Caco-2 (cell line): ENCODE measurements at regions of chr10 and their contacts with region 1.

Region 1: GRCh38 chr10:12129222-12130111 is at the start of gene SEC61A2:
- DNase-seq: peak; percentile 97 to 100
- H3K4me3 ChIP-seq: peak within 1 kb of the TSS; percentile 98
- H3K4me3 Mint-ChIP-seq: peak within 1 kb of the TSS; percentile 79
- H3K27ac Mint-ChIP-seq: peak within 1 kb of the TSS; percentile 87
- H3K4me1 ChIP-seq: 0 out of 2 replicates have a peak, but pooled peaks cover 5% of the 10 kb centered on the region
- H3K4me1 Mint-ChIP-seq: peaks cover 6% of the 10 kb centered on the region
- H3K27me3 ChIP-seq: no peaks in the 10 kb centered on the region
- H3K27me3 Mint-ChIP-seq: no peaks in the 10 kb centered on the region
- CTCF ChIP-seq: no peak
- total RNA-seq, gene SEC61A2: 27.5 and 34.1 TPM in 2 replicates

Region 2: GRCh38 chr10:12068449-12069269 is 60.8 kb before region 1 on chr10 and contains the start of gene DHTKD1:
- CTCF ChIA-PET with region 1: no interaction called
- POLR2A ChIA-PET with region 1: interaction called, 9 read pairs
- intact Hi-C with region 1: loop called (anchors 1 kb)
- DNase-seq: peak; percentile 99 to 100
- H3K4me3 ChIP-seq: peak within 1 kb of the TSS; percentile 77
- H3K4me3 Mint-ChIP-seq: peak within 1 kb of the TSS; percentile 63
- H3K27ac Mint-ChIP-seq: peak within 1 kb of the TSS; percentile 66
- H3K4me1 ChIP-seq: peaks cover 9% of the 10 kb centered on the region; the same call in 1 of the 2 replicates
- H3K4me1 Mint-ChIP-seq: peaks cover 11% of the 10 kb centered on the region
- H3K27me3 ChIP-seq: no peaks in the 10 kb centered on the region
- H3K27me3 Mint-ChIP-seq: no peaks in the 10 kb centered on the region
- CTCF ChIP-seq: peak in 1 of 2 experiments; percentile 61
- total RNA-seq, gene DHTKD1: 57.8 and 61.4 TPM in 2 replicates

Region 3: DNA sequence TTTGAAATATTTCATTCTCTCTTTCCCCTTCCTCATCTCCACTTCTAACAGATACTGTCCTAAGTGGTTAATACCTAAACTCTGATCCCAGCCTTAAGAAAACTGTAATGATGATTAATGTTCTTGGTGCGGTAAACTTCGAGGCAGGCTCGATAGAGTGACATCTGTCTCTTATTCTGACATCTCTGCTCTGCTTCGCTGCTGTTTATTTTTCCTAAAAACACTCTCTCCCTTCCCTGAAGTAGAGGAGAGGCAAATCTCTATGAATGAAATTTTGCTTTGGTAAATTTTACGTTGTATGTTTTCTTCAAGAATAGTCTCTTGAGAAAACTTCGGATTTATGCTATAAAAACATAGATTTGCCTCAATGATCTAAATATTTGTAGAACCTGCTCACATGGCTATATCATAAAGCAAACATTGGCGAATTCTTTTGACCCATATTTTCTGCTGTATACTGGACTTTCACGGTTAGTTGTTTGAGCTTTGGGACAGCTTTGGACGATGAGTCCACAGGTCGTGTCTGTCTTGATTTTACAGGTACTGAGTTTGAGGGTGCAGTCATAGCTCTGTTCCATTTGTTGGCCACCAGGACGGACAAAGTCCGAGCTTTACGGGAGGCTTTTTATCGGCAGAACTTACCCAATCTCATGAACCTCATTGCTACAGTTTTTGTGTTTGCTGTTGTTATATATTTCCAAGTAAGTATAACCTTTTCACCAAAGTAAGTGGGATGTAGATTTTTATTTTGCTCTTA is 27.1 kb after region 1 on chr10:
- CTCF ChIA-PET with region 1: interaction called, 8 read pairs
- POLR2A ChIA-PET with region 1: no interaction called
- intact Hi-C with region 1: loop called (anchors 1 kb)
- DNase-seq: peak; percentile 69 to 81
- H3K4me3 ChIP-seq: peak overlapping the region; percentile 11; the same call in 1 of the 2 replicates
- H3K4me3 Mint-ChIP-seq: peak overlapping the region; percentile 49
- H3K27ac Mint-ChIP-seq: peak overlapping the region; percentile 11
- H3K4me1 ChIP-seq: peaks cover 27% of the 10 kb centered on the region
- H3K4me1 Mint-ChIP-seq: peaks cover 27% of the 10 kb centered on the region
- H3K27me3 ChIP-seq: no peaks in the 10 kb centered on the region
- H3K27me3 Mint-ChIP-seq: no peaks in the 10 kb centered on the region
- CTCF ChIP-seq: peak in 1 of 2 experiments; percentile 28

Region 4: GRCh38 chr10:12195603-12196506 is 66.4 kb after region 1 on chr10 and contains the starts of genes CDC123 and NUDT5:
- CTCF ChIA-PET with region 1: interaction called, 3 read pairs
- POLR2A ChIA-PET with region 1: interaction called, 4 read pairs
- intact Hi-C with region 1: loop called (anchors 1 kb)
- DNase-seq: peak; percentile 91 to 92
- H3K4me3 ChIP-seq: peak within 1 kb of the TSS; percentile 80
- H3K4me3 Mint-ChIP-seq: peak within 1 kb of the TSS; percentile 97
- H3K27ac Mint-ChIP-seq: peak within 1 kb of the TSS; percentile 95
- H3K4me1 ChIP-seq: peaks cover 5% of the 10 kb centered on the region
- H3K4me1 Mint-ChIP-seq: peaks cover 14% of the 10 kb centered on the region
- H3K27me3 ChIP-seq: no peaks in the 10 kb centered on the region
- H3K27me3 Mint-ChIP-seq: no peaks in the 10 kb centered on the region
- CTCF ChIP-seq: no peak
- total RNA-seq, gene CDC123: 190 and 199 TPM in 2 replicates
- total RNA-seq, gene NUDT5: 160 and 164 TPM in 2 replicates

Region 5: GRCh38 chr10:12419262-12419847 is 289.9 kb after region 1 on chr10:
- CTCF ChIA-PET with region 1: no interaction called
- POLR2A ChIA-PET with region 1: no interaction called
- intact Hi-C with region 1: no loop called
- DNase-seq: peak in 1 of 2 experiments; percentile 8
- H3K4me3 ChIP-seq: no peak overlapping the region
- H3K4me3 Mint-ChIP-seq: no peak overlapping the region
- H3K27ac Mint-ChIP-seq: no peak overlapping the region
- H3K4me1 ChIP-seq: no peaks in the 10 kb centered on the region
- H3K4me1 Mint-ChIP-seq: no peaks in the 10 kb centered on the region
- H3K27me3 ChIP-seq: no peaks in the 10 kb centered on the region
- H3K27me3 Mint-ChIP-seq: no peaks in the 10 kb centered on the region
- CTCF ChIP-seq: no peak